Motor neuron (in vitro differentiated cells): ENCODE measurements at regions of chr13 and their contacts with region 1.

Region 1: GRCh38 chr13:29362849-29363604 is 232.5 kb downstream of the SLC7A1 start:
- ATAC-seq: peak; percentile 93 to 100 (median 99)
- H3K4me3 ChIP-seq: no peak overlapping the region
- H3K27ac ChIP-seq: no peak overlapping the region
- H3K4me1 ChIP-seq: peaks cover 0 to 3% of the 10 kb centered on the region in 2 donors

Region 2: GRCh38 chr13:28658796-28659620 is 704.0 kb before region 1 on chr13 and contains the start of gene POMP:
- in situ Hi-C with region 1: loop called in 1 of 9 experiments (anchors 25 kb)
- ATAC-seq: peak; percentile 92 to 98 (median 98)
- H3K4me3 ChIP-seq: peak within 1 kb of the TSS; percentile 81 to 91 (median 85)
- H3K27ac ChIP-seq: peak within 1 kb of the TSS; percentile 79 to 90
- H3K4me1 ChIP-seq: peaks cover 13 to 15% of the 10 kb centered on the region in 2 donors
- total RNA-seq, gene POMP: 67.9 to 202 (median 88.3) TPM

Region 3: GRCh38 chr13:28819735-28820098 is 543.3 kb before region 1 on chr13:
- in situ Hi-C with region 1: loop called in 4 of 9 experiments (anchors 25 kb)
- ATAC-seq: peak; percentile 91 to 97 (median 96)
- H3K4me3 ChIP-seq: peak overlapping the region; percentile 47 to 59 (median 56)
- H3K27ac ChIP-seq: peak overlapping the region; percentile 9 to 25
- H3K4me1 ChIP-seq: no peaks in the 10 kb centered on the region

Region 4: DNA sequence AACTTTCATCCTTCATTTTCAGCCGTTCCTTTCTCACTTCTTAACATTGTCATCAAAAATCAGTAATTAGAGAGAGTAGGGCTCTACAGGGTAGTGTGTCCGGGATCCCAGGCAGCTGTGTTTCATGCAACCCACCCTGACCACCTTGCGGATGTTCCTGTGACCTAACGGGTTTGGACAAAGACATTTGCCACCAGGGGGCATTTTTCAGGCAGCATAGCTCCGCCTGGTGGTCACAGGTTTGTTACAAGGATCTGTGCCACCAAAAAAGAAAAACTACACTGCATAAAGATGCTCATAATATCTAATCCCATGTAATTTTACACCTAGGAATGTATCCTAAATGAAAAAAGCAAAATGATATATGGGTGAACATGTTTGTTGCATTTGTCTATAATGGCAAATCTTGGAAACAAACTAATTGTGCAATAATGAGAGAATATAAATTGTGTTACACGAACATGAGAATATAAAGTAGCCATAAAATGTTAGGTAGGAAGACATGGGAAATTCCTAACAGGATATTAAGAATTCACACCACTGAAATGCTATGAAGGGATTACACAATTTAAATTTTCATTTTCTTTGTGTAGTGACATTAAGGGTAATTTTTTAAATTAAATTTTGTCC is 109.4 kb after region 1 on chr13:
- in situ Hi-C with region 1: loop called in 1 of 9 experiments (anchors 25 kb)
- ATAC-seq: peak in 3 of 8 experiments; percentile 59 to 76 (median 63)
- H3K4me3 ChIP-seq: no peak overlapping the region
- H3K27ac ChIP-seq: no peak overlapping the region
- H3K4me1 ChIP-seq: no peaks in the 10 kb centered on the region

Region 5: DNA sequence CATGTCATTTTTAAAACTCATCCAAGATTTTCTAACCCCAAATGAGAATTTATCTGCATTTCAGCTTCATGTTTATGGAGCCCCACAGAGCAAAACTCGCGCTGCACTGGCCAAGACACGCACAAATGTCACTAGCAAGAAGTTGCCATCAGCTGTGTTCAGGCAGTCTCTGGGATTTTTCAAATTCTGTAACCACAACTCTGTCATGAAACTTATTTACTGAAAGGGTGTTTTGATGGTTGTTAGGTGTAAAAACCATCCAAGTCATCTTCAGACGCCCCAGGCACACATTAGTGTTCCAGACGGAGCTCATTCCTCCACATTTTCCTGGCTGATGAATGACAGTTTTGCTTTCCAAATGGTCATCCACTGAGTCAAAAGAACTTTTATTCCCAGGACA is 169.1 kb after region 1 on chr13:
- in situ Hi-C with region 1: no loop called
- ATAC-seq: no peak
- H3K4me3 ChIP-seq: no peak overlapping the region
- H3K27ac ChIP-seq: no peak overlapping the region
- H3K4me1 ChIP-seq: no peaks in the 10 kb centered on the region